ENCODE measurements at regions of chr10 and their contacts with region 1.

Region 1: GRCh38 chr10:3757638-3758490 is 27.1 kb downstream of the KLF6 start:
- DNase-seq: peak; percentile 66
- H3K4me3 Mint-ChIP-seq: peak overlapping the region; percentile 78
- H3K27ac Mint-ChIP-seq: peak overlapping the region; percentile 100
- H3K4me1 Mint-ChIP-seq: peaks cover 84% of the 10 kb centered on the region
- H3K27me3 Mint-ChIP-seq: no peaks in the 10 kb centered on the region

Region 2: GRCh38 chr10:3226960-3227744 is 530.7 kb before region 1 on chr10:
- intact Hi-C with region 1: loop called (anchors 5 kb)
- DNase-seq: no peak
- H3K4me3 Mint-ChIP-seq: no peak overlapping the region
- H3K27ac Mint-ChIP-seq: no peak overlapping the region
- H3K4me1 Mint-ChIP-seq: peaks cover 18% of the 10 kb centered on the region
- H3K27me3 Mint-ChIP-seq: peaks cover 18% of the 10 kb centered on the region

Region 3: DNA sequence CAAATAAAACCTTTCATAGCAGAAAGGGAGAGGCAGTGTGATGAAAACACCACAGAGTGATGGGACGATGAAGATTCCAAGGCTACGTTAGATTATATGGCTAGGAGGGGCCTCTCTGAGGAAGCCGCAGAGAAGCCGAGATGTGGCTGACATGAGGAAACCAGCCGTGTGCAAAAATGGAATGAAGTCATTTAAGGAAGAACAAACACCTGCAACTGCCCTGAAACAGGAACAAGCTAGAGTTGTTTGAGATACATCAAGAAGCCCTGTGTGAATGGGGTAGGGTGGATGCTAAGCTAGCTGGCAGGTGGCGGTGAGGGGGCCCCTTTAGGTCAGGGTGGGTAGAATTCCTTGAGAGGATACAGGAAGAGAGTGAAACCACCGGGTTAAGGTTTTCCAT is 102.3 kb before region 1 on chr10:
- intact Hi-C with region 1: no loop called
- DNase-seq: no peak
- H3K4me3 Mint-ChIP-seq: no peak overlapping the region
- H3K27ac Mint-ChIP-seq: no peak overlapping the region
- H3K4me1 Mint-ChIP-seq: peaks cover 37% of the 10 kb centered on the region
- H3K27me3 Mint-ChIP-seq: peaks cover 13% of the 10 kb centered on the region

Region 4: GRCh38 chr10:3668276-3668965 is 89.4 kb before region 1 on chr10:
- intact Hi-C with region 1: loop called (anchors 1 kb)
- DNase-seq: peak; percentile 55
- H3K4me3 Mint-ChIP-seq: peak overlapping the region; percentile 82
- H3K27ac Mint-ChIP-seq: peak overlapping the region; percentile 89
- H3K4me1 Mint-ChIP-seq: peaks cover 44% of the 10 kb centered on the region
- H3K27me3 Mint-ChIP-seq: peaks cover 3% of the 10 kb centered on the region

Region 5: GRCh38 chr10:3740157-3740871 is 17.6 kb before region 1 on chr10:
- intact Hi-C with region 1: loop called (anchors 1 kb)
- DNase-seq: no peak
- H3K4me3 Mint-ChIP-seq: no peak overlapping the region
- H3K27ac Mint-ChIP-seq: peak overlapping the region; percentile 7
- H3K4me1 Mint-ChIP-seq: peaks cover 30% of the 10 kb centered on the region
- H3K27me3 Mint-ChIP-seq: no peaks in the 10 kb centered on the region

Region 6: GRCh38 chr10:3785257-3785850 is 27.5 kb after region 1 on chr10:
- intact Hi-C with region 1: loop called (anchors 1 kb)
- DNase-seq: peak; percentile 99
- H3K4me3 Mint-ChIP-seq: peak overlapping the region; percentile 93
- H3K27ac Mint-ChIP-seq: peak overlapping the region; percentile 96
- H3K4me1 Mint-ChIP-seq: peaks cover 49% of the 10 kb centered on the region
- H3K27me3 Mint-ChIP-seq: no peaks in the 10 kb centered on the region

Region 7: DNA sequence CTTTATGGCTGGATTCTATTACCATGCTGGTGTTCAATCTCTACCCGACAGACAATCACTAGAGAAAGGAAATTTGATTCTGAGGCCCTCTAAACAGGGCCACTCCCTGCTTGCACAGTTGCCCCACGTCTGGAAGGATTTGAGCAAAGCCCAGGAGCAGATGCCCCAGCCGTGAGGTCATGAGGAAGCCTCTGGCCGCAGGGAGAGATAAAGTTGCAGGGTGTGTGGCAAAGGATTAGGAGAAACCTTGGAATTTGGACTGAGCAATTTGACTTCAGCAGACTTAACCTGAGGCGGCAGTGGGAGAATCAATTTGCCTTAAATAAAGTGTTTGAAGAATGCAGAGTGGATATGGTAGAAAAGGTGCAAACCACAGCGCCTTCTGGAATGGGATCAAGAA is 67.4 kb after region 1 on chr10:
- intact Hi-C with region 1: no loop called
- DNase-seq: no peak
- H3K4me3 Mint-ChIP-seq: no peak overlapping the region
- H3K27ac Mint-ChIP-seq: peak overlapping the region; percentile 27
- H3K4me1 Mint-ChIP-seq: peaks cover 31% of the 10 kb centered on the region
- H3K27me3 Mint-ChIP-seq: no peaks in the 10 kb centered on the region

Region 8: GRCh38 chr10:3852147-3852904 is 94.5 kb after region 1 on chr10:
- intact Hi-C with region 1: loop called (anchors 5 kb)
- DNase-seq: peak; percentile 58
- H3K4me3 Mint-ChIP-seq: peak overlapping the region; percentile 52
- H3K27ac Mint-ChIP-seq: peak overlapping the region; percentile 92
- H3K4me1 Mint-ChIP-seq: peaks cover 37% of the 10 kb centered on the region
- H3K27me3 Mint-ChIP-seq: no peaks in the 10 kb centered on the region

Region 9: GRCh38 chr10:3868271-3868664 is 110.4 kb after region 1 on chr10:
- intact Hi-C with region 1: no loop called
- DNase-seq: no peak
- H3K4me3 Mint-ChIP-seq: no peak overlapping the region
- H3K27ac Mint-ChIP-seq: peak overlapping the region; percentile 77
- H3K4me1 Mint-ChIP-seq: peaks cover 78% of the 10 kb centered on the region
- H3K27me3 Mint-ChIP-seq: no peaks in the 10 kb centered on the region

Region 10: DNA sequence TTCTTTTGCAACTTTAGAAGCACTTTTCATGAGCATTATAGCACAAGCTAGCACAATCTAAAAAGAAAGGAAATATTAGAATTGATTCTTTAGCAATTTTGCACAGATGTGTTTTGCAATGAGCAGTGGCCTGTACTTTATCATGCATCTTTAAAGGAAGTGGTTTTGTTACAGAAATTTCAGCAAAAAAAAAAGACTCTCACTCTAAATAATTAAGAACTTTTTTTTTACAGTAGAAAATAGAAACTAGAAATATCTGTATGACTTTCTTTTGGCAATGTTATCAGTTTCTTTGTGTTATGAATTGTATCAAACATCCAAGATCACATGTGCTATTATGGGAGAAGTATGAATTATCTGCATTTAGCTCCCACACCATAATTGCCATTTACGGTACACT is 222.8 kb after region 1 on chr10:
- intact Hi-C with region 1: no loop called
- DNase-seq: no peak
- H3K4me3 Mint-ChIP-seq: no peak overlapping the region
- H3K27ac Mint-ChIP-seq: no peak overlapping the region
- H3K4me1 Mint-ChIP-seq: peaks cover 38% of the 10 kb centered on the region
- H3K27me3 Mint-ChIP-seq: no peaks in the 10 kb centered on the region

Region 11: GRCh38 chr10:4241724-4242345 is 484.0 kb after region 1 on chr10:
- intact Hi-C with region 1: loop called (anchors 10 kb)
- DNase-seq: no peak
- H3K4me3 Mint-ChIP-seq: no peak overlapping the region
- H3K27ac Mint-ChIP-seq: no peak overlapping the region
- H3K4me1 Mint-ChIP-seq: peaks cover 43% of the 10 kb centered on the region
- H3K27me3 Mint-ChIP-seq: peaks cover 2% of the 10 kb centered on the region